Ovary (tissue), 10 donors: ENCODE measurements at regions of chr17 and their contacts with region 1.

Region 1: DNA sequence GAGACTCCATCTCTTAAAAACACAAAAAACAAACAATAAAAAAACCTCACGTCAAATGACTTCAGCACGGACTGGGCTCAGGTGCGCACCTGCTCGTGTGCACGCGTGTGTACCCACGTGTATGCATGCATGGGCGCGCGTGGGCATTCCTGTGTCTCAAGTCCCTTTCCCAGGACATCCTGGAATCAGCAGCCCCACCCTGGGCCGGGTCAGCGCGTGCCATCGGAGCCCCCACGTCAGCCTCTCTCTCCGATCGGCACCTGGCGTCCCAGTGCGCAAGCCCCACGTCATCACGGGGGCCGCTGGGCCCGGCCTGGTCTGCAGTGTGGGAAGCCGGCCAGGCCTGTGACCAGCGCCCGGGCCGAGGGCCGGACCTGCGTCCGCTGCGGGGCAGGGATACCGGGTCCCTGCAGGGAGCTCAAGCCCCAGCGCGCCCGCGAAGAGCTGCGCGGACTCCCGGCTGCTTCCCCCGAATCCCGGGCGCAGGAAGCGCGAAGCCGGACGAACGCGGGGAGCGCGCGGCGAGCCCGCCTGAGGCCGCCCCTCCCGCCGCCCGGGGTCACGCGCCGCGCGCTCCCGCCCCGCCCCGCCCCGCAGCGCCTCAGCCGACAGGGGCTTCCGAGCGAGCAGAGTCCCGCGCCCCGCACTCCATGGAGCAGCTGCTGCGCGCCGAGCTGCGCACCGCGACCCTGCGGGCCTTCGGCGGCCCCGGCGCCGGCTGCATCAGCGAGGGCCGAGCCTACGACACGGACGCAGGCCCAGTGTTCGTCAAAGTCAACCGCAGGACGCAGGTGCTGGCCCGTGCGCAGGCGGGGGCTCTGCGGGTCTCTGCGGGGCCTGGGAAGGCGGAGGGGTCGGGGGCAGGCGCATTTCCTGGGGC is at the start of gene FN3K:
- DNase-seq: peak; percentile 78 to 90 (median 84)
- H3K4me3 ChIP-seq: peak within 1 kb of the TSS; percentile 91
- H3K27ac ChIP-seq: peak within 1 kb of the TSS; percentile 50 to 77
- H3K4me1 ChIP-seq: peaks cover 11% of the 10 kb centered on the region
- H3K27me3 ChIP-seq: no peaks in the 10 kb centered on the region
- CTCF ChIP-seq: no peak
- EP300 ChIP-seq: peak; percentile 39
- POLR2A ChIP-seq: peak; percentile 40
- total RNA-seq, gene FN3K: 14.5 to 106 (median 44.6) TPM

Region 2: GRCh38 chr17:82648166-82648668 is 87.0 kb before region 1 on chr17 and contains the start of gene WDR45B:
- intact Hi-C with region 1: loop called in 1 of 4 experiments (anchors 5 kb)
- DNase-seq: peak; percentile 94 to 98 (median 95)
- H3K4me3 ChIP-seq: peak within 1 kb of the TSS; percentile 92
- H3K27ac ChIP-seq: peak within 1 kb of the TSS; percentile 99 to 100
- H3K4me1 ChIP-seq: peaks cover 2% of the 10 kb centered on the region
- H3K27me3 ChIP-seq: no peaks in the 10 kb centered on the region
- CTCF ChIP-seq: no peak
- EP300 ChIP-seq: peak; percentile 84
- POLR2A ChIP-seq: peak; percentile 96
- total RNA-seq, gene WDR45B: 43.0 to 99.3 (median 83.5) TPM

Region 3: GRCh38 chr17:82716203-82717010 is 18.8 kb before region 1 on chr17 and contains the start of gene FN3KRP:
- intact Hi-C with region 1: loop called in 1 of 4 experiments (anchors 2 kb)
- DNase-seq: peak; percentile 92 to 97 (median 96)
- H3K4me3 ChIP-seq: peak within 1 kb of the TSS; percentile 58
- H3K27ac ChIP-seq: peak within 1 kb of the TSS in 1 of 2 donors; percentile 43
- H3K4me1 ChIP-seq: peaks cover 16% of the 10 kb centered on the region
- H3K27me3 ChIP-seq: no peaks in the 10 kb centered on the region
- CTCF ChIP-seq: no peak
- EP300 ChIP-seq: no peak
- POLR2A ChIP-seq: peak; percentile 44
- total RNA-seq, gene FN3KRP: 9.9 to 48.6 (median 39.0) TPM

Region 4: DNA sequence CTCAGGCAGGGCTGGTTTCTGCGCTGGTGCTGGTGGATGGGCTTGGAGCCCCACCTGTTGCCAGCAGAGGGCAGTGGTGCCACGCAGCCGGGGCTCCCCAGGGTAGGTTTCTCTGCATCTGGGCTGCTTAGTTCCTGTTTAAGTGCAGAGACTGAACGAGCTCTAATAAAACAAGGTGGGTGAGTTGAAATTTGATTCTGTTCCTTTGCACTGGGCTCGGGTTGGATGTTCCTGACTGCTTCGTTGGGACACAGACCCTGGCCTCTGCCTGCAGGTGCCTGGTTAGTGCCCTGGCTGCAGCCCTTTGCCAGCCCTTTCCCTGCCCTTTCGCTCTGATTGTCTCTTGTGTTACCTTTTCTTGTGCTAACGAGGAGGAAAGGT is 46.7 kb after region 1 on chr17:
- intact Hi-C with region 1: no loop called
- DNase-seq: peak; percentile 71 to 89 (median 84)
- H3K4me3 ChIP-seq: no peak overlapping the region
- H3K27ac ChIP-seq: no peak overlapping the region
- H3K4me1 ChIP-seq: no peaks in the 10 kb centered on the region
- H3K27me3 ChIP-seq: no peaks in the 10 kb centered on the region
- CTCF ChIP-seq: peak; percentile 74 to 89 (median 89)
- EP300 ChIP-seq: no peak
- POLR2A ChIP-seq: no peak

Region 5: DNA sequence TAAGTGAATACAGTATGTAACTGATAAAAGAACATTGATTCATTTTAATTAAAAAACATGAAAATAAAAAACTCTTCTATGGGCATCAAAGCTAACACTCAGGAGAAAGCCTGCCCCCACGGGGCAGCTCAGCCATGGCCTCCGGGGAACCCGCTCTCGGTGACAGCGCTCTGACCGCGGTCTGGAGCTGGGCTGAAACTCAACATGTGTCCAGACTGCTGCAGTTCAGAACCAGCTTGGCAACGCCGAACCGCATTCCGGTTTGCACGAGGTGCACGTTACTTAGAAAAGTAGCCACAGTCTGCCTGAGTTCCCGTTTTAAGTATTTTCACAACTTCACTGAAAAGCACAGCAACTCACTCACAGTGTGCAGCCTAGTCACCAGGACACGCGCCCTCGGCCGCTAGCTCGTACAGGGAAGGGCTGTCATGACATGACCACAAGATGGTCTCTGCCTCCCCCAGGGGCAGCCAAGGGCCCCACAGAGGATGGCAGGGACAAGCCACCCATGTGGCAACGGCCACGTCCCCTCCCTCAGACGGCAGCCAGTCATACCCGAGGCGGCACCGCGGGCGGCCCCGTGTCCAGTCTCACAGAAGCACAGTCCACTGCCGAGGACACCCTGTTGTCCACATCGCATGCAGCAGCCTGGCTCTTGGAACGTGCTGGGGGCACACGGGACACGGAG is 267.0 kb after region 1 on chr17:
- intact Hi-C with region 1: no loop called
- DNase-seq: no peak
- H3K4me3 ChIP-seq: no peak overlapping the region
- H3K27ac ChIP-seq: no peak overlapping the region
- H3K4me1 ChIP-seq: no peaks in the 10 kb centered on the region
- H3K27me3 ChIP-seq: no peaks in the 10 kb centered on the region
- CTCF ChIP-seq: no peak
- EP300 ChIP-seq: no peak
- POLR2A ChIP-seq: no peak